ENCODE measurements at regions of chr20 and their contacts with region 1.

Region 1: DNA sequence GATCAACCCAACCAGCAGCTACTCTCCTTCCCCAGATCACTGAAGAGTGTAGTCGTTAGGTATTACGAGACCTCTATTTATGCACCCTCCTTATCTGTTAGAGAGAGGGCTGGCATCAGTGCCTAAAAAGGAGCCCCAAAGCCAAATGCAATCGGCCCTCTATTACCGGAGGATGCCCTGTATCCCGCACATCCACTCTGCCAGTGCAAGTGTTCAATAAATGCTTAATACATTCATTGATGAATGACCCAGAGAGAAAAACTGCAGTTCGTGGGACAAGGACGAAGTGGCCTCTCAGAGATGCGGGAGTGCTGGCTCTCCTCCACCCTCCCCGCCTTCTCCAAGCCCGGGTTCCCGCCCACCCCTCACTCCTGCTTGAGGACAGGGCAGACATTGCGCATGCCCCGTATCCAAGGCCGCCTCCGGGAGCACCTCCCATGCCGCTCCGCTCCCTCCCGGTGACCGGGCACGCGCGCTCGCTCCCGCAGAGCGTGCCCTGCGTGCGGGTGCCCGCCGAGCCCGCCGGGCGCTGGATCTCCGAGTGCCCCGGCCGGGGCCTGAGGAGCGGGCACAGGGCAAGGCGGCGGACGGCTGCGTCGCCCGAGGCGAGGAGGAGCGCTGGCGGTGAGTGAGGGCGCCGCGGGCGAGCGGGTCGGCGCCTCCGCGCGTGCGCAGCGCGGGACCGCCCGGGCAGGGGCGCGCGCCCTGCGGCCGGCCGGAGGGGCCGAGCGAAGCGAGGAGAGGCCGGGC is 27.2 kb upstream of the BTBD3 start:
- DNase-seq: peak; percentile 92
- ATAC-seq: peak; percentile 85
- H3K4me3 ChIP-seq: peak overlapping the region; percentile 89 to 93 (median 91)
- H3K27ac ChIP-seq: peak overlapping the region; percentile 81
- H3K4me1 ChIP-seq: peaks cover 40% of the 10 kb centered on the region
- H3K27me3 ChIP-seq: no peaks in the 10 kb centered on the region; a peak in 1 of 5 replicates
- CTCF ChIP-seq: no peak
- EP300 ChIP-seq: peak in 1 of 2 experiments; percentile 23; a peak in 1 of 4 replicates
- POLR2A ChIP-seq: peak in 1 of 2 experiments; percentile 64; a peak in 1 of 4 replicates
- RAD21 ChIP-seq: peak; percentile 62

Region 2: DNA sequence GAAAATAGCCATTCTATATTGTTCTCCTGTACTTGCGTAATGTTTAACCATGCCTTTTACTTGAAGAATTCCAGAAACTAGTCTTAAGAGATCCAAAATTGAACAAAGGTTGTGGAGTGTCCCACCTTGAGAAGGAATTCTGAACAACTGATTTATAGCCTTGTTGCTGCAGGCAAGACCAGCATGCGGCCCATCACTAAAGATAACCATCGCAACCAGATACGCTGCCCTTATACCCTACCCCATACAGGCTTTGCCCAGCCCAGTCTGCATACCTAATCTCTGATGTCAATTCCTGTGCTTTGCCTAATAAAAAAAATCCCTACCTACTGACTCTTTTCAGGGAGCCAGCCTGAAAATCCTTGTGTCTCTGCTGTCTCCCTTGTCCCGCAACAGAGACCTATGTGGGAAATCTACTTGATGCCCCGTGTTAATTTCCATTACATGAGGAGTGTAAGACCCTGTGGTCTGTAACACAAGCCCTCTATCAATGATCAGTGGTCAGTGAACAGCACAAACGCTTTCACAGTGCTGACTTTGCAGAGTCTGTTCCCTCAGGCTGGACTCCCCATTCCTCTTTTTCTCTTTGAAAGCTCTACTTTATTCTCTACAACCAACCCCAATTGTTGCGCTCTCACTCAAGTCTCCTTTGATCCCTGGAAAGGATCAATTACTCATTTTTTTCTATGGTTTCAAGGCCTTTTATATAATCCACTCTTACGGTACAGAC is 98.5 kb before region 1 on chr20:
- CTCF ChIA-PET with region 1: no interaction called
- POLR2A ChIA-PET with region 1: no interaction called
- in situ Hi-C with region 1: no loop called
- intact Hi-C with region 1: loop called (anchors 1 kb)
- DNase-seq: no peak
- ATAC-seq: peak; percentile 71
- H3K4me3 ChIP-seq: no peak overlapping the region
- H3K27ac ChIP-seq: no peak overlapping the region
- H3K4me1 ChIP-seq: peaks cover 16% of the 10 kb centered on the region
- H3K27me3 ChIP-seq: no peaks in the 10 kb centered on the region
- CTCF ChIP-seq: no peak
- EP300 ChIP-seq: no peak
- POLR2A ChIP-seq: no peak
- RAD21 ChIP-seq: no peak

Region 3: DNA sequence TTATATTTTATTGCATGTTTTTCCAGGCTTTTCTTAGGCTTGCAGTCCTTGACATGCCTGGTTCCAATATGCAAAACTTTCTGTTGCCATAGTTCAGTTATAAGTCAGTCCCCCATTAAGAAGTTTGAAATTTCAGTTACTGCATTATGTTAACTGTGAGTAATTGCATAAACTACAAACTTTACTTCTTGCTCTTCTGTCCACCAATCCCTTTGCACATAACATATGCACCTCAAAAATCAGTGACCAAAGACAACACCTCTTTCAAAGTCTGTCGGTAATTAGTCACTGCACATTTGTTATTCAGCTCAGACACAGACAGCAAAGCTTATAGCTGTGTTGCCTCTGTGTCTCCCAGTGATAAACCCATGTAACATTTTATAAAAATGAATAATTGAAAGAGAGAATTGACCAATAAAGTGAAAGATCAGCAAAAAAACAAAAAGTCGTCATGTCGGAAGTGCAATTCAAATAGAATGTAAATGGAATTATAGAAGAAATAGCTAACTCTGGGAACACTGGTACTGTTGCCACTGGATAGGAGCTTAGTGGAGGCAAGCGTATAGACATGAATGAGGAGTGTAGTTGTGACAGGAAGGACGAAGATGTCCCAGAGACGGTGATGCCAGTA is 23.1 kb before region 1 on chr20:
- CTCF ChIA-PET with region 1: no interaction called
- POLR2A ChIA-PET with region 1: no interaction called
- in situ Hi-C with region 1: no loop called
- intact Hi-C with region 1: no loop called
- DNase-seq: no peak
- ATAC-seq: no peak
- H3K4me3 ChIP-seq: no peak overlapping the region
- H3K27ac ChIP-seq: no peak overlapping the region
- H3K4me1 ChIP-seq: no peaks in the 10 kb centered on the region
- H3K27me3 ChIP-seq: no peaks in the 10 kb centered on the region
- CTCF ChIP-seq: no peak
- EP300 ChIP-seq: no peak
- POLR2A ChIP-seq: no peak
- RAD21 ChIP-seq: no peak

Region 4: GRCh38 chr20:11912013-11912658 is 21.6 kb after region 1 on chr20:
- CTCF ChIA-PET with region 1: no interaction called
- POLR2A ChIA-PET with region 1: no interaction called
- in situ Hi-C with region 1: no loop called
- intact Hi-C with region 1: loop called (anchors 2 kb)
- DNase-seq: peak; percentile 30
- ATAC-seq: peak; percentile 91
- H3K4me3 ChIP-seq: no peak overlapping the region
- H3K27ac ChIP-seq: no peak overlapping the region
- H3K4me1 ChIP-seq: peaks cover 17% of the 10 kb centered on the region
- H3K27me3 ChIP-seq: no peaks in the 10 kb centered on the region
- CTCF ChIP-seq: peak; percentile 50; the same call in 1 of the 2 replicates
- EP300 ChIP-seq: no peak
- POLR2A ChIP-seq: no peak
- RAD21 ChIP-seq: no peak

Region 5: DNA sequence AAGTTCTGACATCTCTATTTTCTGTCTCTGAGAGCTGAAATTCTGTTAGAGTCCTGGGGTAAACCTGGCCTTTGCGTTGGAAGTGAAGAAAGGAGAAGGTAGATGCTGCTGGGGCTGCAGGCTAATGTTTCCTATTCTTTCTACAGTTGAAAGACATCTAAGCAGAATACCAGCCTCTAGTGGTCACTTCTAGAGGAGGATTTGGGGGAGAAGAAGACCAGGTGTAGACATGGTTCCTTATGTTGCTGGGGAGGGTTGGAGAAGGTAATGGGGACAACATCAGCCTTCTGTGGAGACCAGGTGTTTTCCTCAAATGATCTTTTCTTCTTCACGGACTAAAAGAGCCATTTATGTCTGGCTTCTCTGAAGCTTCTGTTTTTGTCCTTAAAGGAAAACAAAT is 89.8 kb after region 1 on chr20:
- CTCF ChIA-PET with region 1: no interaction called
- POLR2A ChIA-PET with region 1: no interaction called
- in situ Hi-C with region 1: no loop called
- intact Hi-C with region 1: loop called (anchors 5 kb)
- DNase-seq: no peak
- ATAC-seq: peak; percentile 36; the same call in 1 of the 3 replicates
- H3K4me3 ChIP-seq: no peak overlapping the region
- H3K27ac ChIP-seq: no peak overlapping the region
- H3K4me1 ChIP-seq: peaks cover 18% of the 10 kb centered on the region
- H3K27me3 ChIP-seq: no peaks in the 10 kb centered on the region
- CTCF ChIP-seq: no peak
- EP300 ChIP-seq: no peak
- POLR2A ChIP-seq: no peak
- RAD21 ChIP-seq: no peak